GM12878 (cell line): ENCODE measurements at regions of chr1 and their contacts with region 1.

Region 1: DNA sequence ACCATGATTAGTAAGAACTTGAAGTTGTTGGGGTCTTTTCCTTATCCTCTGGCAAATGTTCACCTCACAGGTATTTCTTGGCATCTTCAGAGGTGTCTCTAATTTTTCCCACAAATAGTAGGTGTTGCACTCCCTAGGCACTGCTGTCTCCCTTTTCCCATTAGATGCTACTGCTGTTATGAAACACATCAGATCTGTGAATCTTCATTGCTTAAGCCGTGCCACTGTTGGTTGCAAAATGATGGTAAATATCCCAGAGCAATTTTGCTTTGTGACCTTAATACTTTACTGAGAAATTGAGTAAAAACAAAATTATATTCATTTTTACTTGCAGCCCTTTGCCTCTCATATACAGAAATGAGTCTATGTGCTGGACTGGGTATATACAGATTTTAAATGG is 169.6 kb downstream of the KCNK2 start:
- DNase-seq: no peak
- ATAC-seq: no peak
- H3K4me3 ChIP-seq: no peak overlapping the region
- H3K27ac ChIP-seq: no peak overlapping the region
- H3K4me1 ChIP-seq: no peaks in the 10 kb centered on the region
- H3K27me3 ChIP-seq: no peaks in the 10 kb centered on the region
- CTCF ChIP-seq: no peak
- EP300 ChIP-seq: no peak
- POLR2A ChIP-seq: no peak
- RAD21 ChIP-seq: no peak

Region 2: GRCh38 chr1:215306426-215306825 is 54.3 kb after region 1 on chr1:
- CTCF ChIA-PET with region 1: no interaction called
- POLR2A ChIA-PET with region 1: no interaction called
- RAD21 ChIA-PET with region 1: no interaction called
- SMC1A ChIA-PET with region 1: no interaction called
- in situ Hi-C with region 1: no loop called
- intact Hi-C with region 1: loop called (anchors 2 kb)
- DNase-seq: no peak
- ATAC-seq: no peak
- H3K4me3 ChIP-seq: no peak overlapping the region
- H3K27ac ChIP-seq: no peak overlapping the region
- H3K4me1 ChIP-seq: no peaks in the 10 kb centered on the region
- H3K27me3 ChIP-seq: no peaks in the 10 kb centered on the region
- CTCF ChIP-seq: no peak
- EP300 ChIP-seq: no peak
- POLR2A ChIP-seq: no peak
- RAD21 ChIP-seq: no peak